A673 (cell line): ENCODE measurements at regions of chr2 and their contacts with region 1.

Region 1: DNA sequence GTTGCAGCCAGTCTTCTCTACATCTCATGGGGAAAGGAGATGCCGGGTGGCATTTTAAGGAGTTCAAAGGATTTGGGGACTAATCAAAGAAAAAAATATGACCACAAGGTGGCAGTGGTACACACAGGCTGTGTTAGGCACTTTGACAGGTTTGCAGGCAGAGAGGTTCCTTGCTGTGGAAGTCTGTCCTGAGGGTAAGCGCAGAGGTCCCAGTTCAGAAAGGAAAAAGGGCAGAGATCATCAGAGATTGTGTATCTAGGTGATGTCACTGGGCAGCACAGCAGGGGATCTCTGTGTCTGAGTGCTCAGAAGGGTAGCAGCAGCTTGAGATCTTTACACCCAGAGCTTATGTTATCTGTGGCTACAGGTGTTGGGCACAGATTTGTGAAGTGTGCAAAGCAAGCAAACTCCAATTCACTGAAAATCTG is 231.4 kb downstream of the LRRTM1 start:
- DNase-seq: peak; percentile 79
- H3K4me3 ChIP-seq: no peak overlapping the region
- H3K27ac ChIP-seq: no peak overlapping the region
- H3K4me1 ChIP-seq: no peaks in the 10 kb centered on the region
- H3K27me3 ChIP-seq: no peaks in the 10 kb centered on the region
- CTCF ChIP-seq: peak; percentile 72

Region 2: DNA sequence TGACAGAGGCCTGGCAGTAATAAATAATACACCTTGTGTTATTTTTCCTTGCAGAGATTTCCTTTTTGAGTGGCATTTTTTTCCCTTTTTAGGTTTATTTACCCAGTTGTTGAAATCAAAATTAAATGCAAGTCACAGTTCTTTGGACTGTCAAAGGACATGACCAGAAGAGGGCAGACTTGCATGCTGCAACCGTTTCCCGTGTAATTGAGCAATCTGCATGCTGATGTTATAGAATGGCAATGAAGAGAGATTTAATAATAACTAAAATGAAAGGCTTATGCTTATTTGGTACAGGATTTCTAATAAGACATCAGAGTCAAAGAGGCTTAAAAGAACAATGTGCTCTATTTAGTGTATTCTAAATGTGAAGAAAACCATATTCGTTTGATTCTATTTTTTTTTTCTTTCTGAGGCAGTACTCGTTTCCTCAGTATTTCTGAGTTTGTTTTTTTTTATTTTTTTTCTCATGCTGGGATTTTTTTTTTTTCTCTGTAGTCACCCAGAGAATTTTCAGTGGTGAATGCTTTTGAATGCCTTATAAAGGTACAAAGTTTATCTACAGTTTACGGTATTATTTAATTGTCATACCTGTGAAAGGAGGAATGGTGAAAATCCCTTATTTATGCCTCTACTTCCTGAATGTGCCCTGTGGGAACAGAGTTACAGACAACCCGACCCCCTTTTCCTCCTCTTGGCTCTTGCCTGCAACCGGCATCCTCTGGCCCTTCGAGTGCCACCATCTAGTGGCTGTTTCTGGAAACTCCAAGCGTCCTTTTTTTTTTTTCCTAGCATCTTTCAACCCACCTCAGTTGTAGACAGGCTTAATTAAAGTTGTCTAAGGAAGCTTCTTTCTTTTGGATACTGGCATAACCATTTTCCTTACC is 137.1 kb before region 1 on chr2:
- CTCF ChIA-PET with region 1: no interaction called
- POLR2A ChIA-PET with region 1: no interaction called
- intact Hi-C with region 1: loop called (anchors 2 kb)
- DNase-seq: peak; percentile 77
- H3K4me3 ChIP-seq: no peak overlapping the region
- H3K27ac ChIP-seq: no peak overlapping the region
- H3K4me1 ChIP-seq: no peaks in the 10 kb centered on the region
- H3K27me3 ChIP-seq: peaks cover 17% of the 10 kb centered on the region
- CTCF ChIP-seq: peak; percentile 76

Region 3: GRCh38 chr2:80437959-80438358 is 364.8 kb after region 1 on chr2:
- CTCF ChIA-PET with region 1: no interaction called
- POLR2A ChIA-PET with region 1: no interaction called
- intact Hi-C with region 1: no loop called
- DNase-seq: peak; percentile 0
- H3K4me3 ChIP-seq: no peak overlapping the region
- H3K27ac ChIP-seq: no peak overlapping the region
- H3K4me1 ChIP-seq: no peaks in the 10 kb centered on the region
- H3K27me3 ChIP-seq: no peaks in the 10 kb centered on the region
- CTCF ChIP-seq: no peak